ENCODE measurements at regions of chr17 and their contacts with region 1.

Region 1: GRCh38 chr17:63773381-63774140 is at the start of gene CCDC47:
- DNase-seq: peak; percentile 97
- ATAC-seq: peak; percentile 87
- H3K4me3 Mint-ChIP-seq: peak within 1 kb of the TSS; percentile 91
- H3K27ac Mint-ChIP-seq: peak within 1 kb of the TSS; percentile 97
- H3K4me1 Mint-ChIP-seq: peaks cover 33% of the 10 kb centered on the region
- H3K27me3 Mint-ChIP-seq: no peaks in the 10 kb centered on the region
- total RNA-seq, gene CCDC47: 47.0 to 54.8 TPM

Region 2: GRCh38 chr17:63707151-63707550 is 66.4 kb before region 1 on chr17:
- POLR2A ChIA-PET with region 1: interaction called, 47 read pairs
- DNase-seq: no peak
- ATAC-seq: no peak
- H3K4me3 Mint-ChIP-seq: peak overlapping the region; percentile 62
- H3K27ac Mint-ChIP-seq: peak overlapping the region; percentile 82
- H3K4me1 Mint-ChIP-seq: peaks cover 64% of the 10 kb centered on the region
- H3K27me3 Mint-ChIP-seq: no peaks in the 10 kb centered on the region

Region 3: DNA sequence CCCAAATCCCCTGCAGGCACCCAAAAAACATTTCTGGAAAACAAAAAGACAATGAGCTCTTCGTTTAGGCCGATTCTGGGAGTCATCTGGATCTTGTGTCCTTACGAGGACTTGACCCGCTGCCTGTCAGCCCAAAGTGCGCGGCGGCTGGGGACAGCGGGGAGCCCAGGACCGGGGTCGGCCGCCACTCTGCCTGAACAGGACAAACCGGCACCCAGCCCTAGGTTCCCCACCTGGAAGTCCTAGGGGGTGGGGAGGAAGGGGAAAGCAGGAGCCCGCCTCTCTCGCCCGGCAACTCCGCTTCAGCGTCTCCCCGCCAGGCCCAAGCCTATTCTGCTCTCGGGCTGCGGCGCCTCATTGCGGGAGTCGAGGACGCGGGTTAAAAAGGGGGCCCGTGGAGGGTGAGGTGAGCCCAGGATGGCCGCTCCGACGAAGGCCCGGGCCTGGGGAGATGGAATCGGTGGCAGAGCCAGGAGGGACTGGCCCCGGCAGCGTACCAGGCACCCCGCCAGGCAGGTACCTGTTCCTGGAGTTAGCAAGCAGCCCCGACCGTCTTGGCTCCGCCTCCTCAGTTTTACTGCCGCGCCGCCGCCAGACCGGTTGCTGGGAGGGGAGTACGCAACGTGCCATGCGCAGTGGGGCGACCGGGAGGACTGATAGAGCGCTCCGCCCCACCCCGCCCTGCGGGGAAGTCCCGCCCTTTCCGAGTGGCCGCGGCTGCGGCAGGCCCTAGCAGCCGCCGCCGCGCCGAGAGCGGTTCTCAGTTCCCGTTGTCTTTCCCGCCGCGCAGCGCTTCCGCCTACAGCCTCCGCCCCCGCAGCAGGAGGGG is 32.1 kb before region 1 on chr17 and contains the start of gene STRADA:
- POLR2A ChIA-PET with region 1: interaction called, 31 read pairs
- DNase-seq: peak; percentile 97
- ATAC-seq: peak; percentile 93
- H3K4me3 Mint-ChIP-seq: peak within 1 kb of the TSS; percentile 92
- H3K27ac Mint-ChIP-seq: peak within 1 kb of the TSS; percentile 97
- H3K4me1 Mint-ChIP-seq: peaks cover 24% of the 10 kb centered on the region
- H3K27me3 Mint-ChIP-seq: no peaks in the 10 kb centered on the region
- total RNA-seq, gene STRADA: 54.0 to 61.4 TPM

Region 4: GRCh38 chr17:63827002-63827771 is 53.6 kb after region 1 on chr17 and contains the starts of genes FTSJ3 and PSMC5:
- POLR2A ChIA-PET with region 1: interaction called, 21 read pairs
- DNase-seq: peak; percentile 93
- ATAC-seq: peak; percentile 92
- H3K4me3 Mint-ChIP-seq: peak within 1 kb of the TSS; percentile 91
- H3K27ac Mint-ChIP-seq: peak within 1 kb of the TSS; percentile 94
- H3K4me1 Mint-ChIP-seq: peaks cover 59% of the 10 kb centered on the region
- H3K27me3 Mint-ChIP-seq: no peaks in the 10 kb centered on the region
- total RNA-seq, gene FTSJ3: 56.7 to 58.6 TPM
- total RNA-seq, gene PSMC5: 132 to 135 TPM

Region 5: DNA sequence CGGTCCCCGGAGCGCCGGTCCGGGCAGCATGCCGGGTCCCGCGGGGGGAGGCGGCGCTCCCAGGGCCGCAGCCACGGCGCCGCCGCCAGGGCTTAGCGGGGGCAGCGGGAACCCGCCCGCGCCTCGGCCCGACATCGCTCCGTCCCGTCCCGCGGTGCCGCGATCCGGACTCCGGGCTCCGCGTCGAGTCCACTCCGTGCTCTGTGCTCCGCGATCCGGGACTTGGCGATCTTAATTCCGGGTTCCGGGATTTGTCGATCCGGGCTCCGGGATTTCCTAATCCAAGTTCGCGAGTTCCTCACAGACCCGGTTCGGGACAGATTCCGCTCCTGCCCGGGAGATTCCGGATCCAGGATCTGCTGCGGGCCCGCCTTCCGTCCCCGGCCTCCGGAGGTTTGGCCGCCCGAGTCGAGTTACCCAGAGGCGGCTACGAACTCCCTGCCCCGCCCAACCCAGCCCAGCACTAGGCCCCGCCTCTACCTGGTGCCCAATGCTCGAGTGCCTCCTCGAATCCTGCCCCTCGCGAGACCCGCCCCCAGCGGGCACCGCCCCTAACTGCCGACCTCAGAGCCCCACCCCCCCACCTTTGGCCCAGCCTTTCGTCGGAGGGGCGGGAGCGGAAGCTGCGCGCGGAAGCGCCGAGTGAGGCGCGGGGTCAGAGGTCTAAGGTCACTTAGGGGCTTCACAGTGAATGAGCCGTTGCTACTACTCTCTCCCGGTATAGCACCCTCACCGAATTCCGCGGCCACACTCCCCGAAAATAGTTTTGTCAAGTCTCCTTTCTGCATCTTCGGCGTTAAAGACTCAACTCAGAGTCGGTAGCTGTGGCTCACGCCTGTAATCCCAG is 69.2 kb after region 1 on chr17 and contains the start of gene SMARCD2:
- POLR2A ChIA-PET with region 1: interaction called, 25 read pairs
- DNase-seq: peak; percentile 99
- ATAC-seq: peak; percentile 83
- H3K4me3 Mint-ChIP-seq: peak within 1 kb of the TSS; percentile 93
- H3K27ac Mint-ChIP-seq: peak within 1 kb of the TSS; percentile 95
- H3K4me1 Mint-ChIP-seq: peaks cover 26% of the 10 kb centered on the region
- H3K27me3 Mint-ChIP-seq: peaks cover 2% of the 10 kb centered on the region
- total RNA-seq, gene SMARCD2: 129 to 138 TPM

Measured in activated naive CD8-positive, alpha-beta T cell treated with anti-CD3 and anti-CD28 coated beads, Interleukin-2, amount 10 ng/mL, durations not matched to agents 7 days and 5 days (primary cell).